Prostate gland (tissue), 2 donors: ENCODE measurements at regions of chr4 and their contacts with region 1.

Region 1: GRCh38 chr4:169270810-169271691 is at the start of gene SH3RF1:
- DNase-seq: peak; percentile 92
- H3K4me3 ChIP-seq: peak within 1 kb of the TSS; percentile 92 to 97
- H3K27ac ChIP-seq: peak within 1 kb of the TSS; percentile 91 to 95
- H3K4me1 ChIP-seq: no peaks in the 10 kb centered on the region
- H3K27me3 ChIP-seq: no peaks in the 10 kb centered on the region
- CTCF ChIP-seq: peak in 3 of 4 experiments; percentile 24 to 57 (median 49)
- POLR2A ChIP-seq: peak; percentile 91
- total RNA-seq, gene SH3RF1: 42.9 to 57.5 TPM

Region 2: DNA sequence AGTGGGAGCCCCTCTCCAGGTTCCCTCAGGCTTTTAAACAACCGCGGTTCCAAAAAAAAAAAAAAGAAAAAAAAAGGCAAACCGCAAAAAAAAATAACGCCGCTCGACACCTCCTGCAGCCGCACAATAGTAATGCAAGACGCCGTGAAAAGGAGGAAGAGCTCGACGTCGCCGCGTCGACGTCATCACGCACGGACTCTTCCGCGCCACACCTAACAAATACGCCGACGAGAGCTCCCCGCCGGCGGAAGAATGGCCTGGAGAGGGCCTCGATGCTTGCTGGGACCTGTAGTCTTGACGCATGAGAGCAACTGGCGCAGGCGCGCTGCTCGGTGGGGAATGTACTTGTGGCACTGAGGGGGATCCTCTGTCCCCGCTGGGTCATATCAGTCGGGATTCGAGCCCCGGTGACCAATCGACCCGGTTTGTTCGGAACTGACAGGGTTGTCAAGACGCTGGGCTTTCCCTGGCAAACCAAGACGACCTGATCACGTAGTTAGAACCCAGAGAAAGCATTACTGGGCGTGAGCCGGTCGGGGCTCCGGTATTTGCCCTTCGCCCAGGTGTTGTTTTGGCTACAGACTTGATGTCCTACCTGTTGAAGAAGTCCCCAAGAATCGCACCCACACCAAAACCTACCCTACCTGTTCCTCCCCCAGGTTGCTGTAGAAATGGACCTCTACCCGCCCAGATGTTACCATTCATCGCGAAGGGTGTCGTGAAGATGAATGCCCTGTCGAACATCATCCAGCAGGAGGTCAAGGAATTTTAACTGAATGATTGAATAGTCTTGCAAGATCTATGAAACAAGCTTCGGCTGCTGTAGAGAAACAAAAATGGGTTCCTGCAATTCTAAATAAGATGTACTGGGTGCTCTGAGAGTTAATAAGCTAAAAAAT is 260.7 kb before region 1 on chr4 and contains the start of gene CBR4:
- intact Hi-C with region 1: loop called (anchors 5 kb)
- DNase-seq: peak; percentile 98
- H3K4me3 ChIP-seq: peak within 1 kb of the TSS; percentile 60 to 64
- H3K27ac ChIP-seq: peak within 1 kb of the TSS; percentile 89 to 90
- H3K4me1 ChIP-seq: no peaks in the 10 kb centered on the region
- H3K27me3 ChIP-seq: no peaks in the 10 kb centered on the region
- CTCF ChIP-seq: peak in 2 of 4 experiments; percentile 36 to 52
- POLR2A ChIP-seq: peak; percentile 72
- total RNA-seq, gene CBR4: 15.6 to 23.7 TPM

Region 3: GRCh38 chr4:169089004-169089403 is 182.0 kb before region 1 on chr4:
- intact Hi-C with region 1: no loop called
- DNase-seq: no peak
- H3K4me3 ChIP-seq: no peak overlapping the region
- H3K27ac ChIP-seq: no peak overlapping the region
- H3K4me1 ChIP-seq: peaks cover 5% of the 10 kb centered on the region
- H3K27me3 ChIP-seq: no peaks in the 10 kb centered on the region
- CTCF ChIP-seq: no peak
- POLR2A ChIP-seq: no peak

Region 4: DNA sequence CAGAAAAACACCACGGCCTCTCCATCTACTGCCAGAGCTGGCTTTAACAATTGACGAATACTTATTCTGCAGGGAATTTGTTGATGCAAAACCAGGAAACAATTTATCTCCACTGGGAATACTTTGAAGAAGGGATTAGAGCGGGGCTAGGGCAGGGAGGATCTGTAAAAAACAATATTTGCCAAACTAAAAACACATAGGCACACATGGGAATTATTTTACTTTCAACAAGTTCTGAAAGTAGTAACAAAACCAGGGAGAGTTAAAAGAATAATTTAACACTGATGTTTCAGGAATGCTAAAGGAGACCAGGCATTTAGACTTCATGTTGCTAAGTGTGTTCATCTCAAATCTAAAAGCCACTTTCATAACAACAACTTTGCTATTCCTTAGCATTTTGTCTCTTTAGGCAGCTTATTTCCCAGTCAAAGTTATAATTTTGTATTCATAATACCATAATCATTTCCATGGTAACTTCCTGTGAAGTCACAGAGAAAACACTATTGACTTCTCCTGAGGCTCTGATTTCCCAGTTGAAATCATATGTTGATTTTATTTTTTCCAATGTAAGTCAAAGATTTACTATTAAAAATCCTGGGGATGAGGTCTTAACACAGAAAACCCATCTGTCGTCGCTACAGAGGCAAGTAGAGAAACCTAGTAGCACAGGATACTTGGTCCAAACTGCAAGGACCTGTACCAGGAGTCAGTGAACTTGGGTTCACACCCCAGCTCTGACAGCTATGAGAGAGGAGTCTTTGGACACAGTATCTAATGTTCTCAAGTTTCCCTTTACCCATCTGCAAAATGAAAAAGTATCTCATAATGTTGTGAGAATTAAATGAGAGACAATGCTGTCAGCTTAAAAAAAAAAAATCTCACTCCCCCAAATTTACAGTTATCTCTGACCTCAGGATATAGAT is 69.6 kb before region 1 on chr4:
- intact Hi-C with region 1: loop called (anchors 10 kb)
- DNase-seq: no peak
- H3K4me3 ChIP-seq: no peak overlapping the region
- H3K27ac ChIP-seq: peak overlapping the region; percentile 1 to 14
- H3K4me1 ChIP-seq: no peaks in the 10 kb centered on the region
- H3K27me3 ChIP-seq: no peaks in the 10 kb centered on the region
- CTCF ChIP-seq: no peak
- POLR2A ChIP-seq: no peak